ENCODE measurements at regions of chr1 and their contacts with region 1.

Region 1: DNA sequence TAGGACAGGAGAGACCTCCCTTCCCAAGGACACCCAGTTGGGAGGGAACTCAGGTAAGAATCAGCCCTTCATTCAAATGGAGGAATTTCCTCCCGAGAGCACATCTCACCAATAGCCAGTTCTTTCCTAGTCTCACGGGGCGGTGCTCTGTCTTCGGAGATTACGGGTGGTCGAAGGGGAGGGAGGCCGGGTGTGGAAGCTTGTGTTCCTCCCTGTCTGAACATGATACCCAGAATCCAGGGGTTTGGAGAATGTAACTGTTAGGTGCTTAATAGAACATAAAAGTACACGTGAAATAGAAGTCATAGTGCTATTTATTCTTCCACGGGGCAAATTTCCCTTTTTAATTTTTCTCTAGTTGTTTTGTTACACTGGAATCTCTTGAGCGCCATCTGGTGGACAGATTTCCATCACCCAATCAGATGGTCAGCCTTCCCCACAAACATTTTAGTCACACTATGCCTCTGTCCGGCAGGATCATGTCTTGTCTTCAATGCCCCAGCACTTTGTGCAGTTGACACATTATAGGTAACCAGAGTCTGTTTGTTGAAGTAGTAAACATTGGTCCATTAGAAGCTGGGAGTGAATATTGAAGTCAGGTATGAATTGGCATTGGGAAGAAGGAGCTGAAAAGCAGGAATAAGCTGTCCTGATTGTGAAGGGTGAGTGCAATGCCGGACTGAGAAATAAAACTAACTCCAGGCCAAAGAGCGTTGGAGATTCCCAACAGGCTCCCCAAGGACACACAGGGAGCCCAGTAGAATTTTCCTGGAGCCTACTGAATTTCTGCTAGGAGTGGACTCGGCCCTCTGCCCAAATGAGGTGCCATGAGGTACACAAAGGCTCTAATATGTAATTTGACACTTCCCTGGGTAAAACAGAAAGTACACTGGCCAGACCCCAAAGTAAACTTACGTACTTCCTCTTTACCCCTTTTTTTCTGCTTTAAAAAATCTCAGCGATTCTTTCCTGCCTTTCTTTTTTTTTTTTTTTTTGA is 27.6 kb upstream of the ZNF697 start:
- DNase-seq: peak; percentile 58 to 73
- ATAC-seq: peak; percentile 92 to 95
- H3K4me3 ChIP-seq: peak overlapping the region; percentile 31; the same call in 2 of the 3 replicates
- H3K27ac ChIP-seq: peak overlapping the region in 1 of 2 experiments; percentile 66; a peak in 2 of 6 replicates
- H3K4me1 ChIP-seq: no peaks in the 10 kb centered on the region
- CTCF ChIP-seq: peak; percentile 79
- EP300 ChIP-seq: no peak
- POLR2A ChIP-seq: no peak
- RAD21 ChIP-seq: peak; percentile 57 to 64; a peak in 4 of 5 replicates

Region 2: DNA sequence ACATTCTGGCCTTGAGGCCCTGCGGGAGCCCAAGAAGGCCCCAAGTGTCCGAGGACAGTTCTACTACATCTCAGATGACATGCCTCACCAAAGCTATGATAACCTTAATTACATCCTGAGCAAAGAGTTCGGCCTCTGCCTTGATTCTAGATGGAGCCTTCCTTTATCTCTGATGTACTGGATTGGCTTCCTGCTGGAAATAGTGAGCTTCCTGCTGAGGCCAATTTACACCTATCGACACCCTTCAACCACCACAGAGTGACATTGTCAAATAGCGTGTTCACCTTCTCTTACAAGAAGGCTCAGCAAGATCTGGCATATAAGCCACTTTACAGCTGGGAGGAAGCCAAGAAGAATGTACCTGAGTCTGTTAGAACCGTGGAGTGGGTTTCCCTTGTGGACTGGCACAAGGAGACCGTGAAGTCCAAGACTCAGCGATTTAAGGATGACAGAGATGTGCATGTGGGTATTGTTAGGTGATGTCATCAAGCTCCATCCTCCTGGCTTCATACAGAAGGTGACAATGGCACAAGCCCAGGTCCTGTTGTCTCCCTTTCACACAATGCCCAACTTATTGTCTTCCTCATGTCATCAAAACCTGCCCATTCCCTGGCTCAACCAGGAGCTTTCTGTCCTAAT is 66.7 kb before region 1 on chr1:
- CTCF ChIA-PET with region 1: interaction called, 177 read pairs
- POLR2A ChIA-PET with region 1: no interaction called
- DNase-seq: no peak
- ATAC-seq: no peak
- H3K4me3 ChIP-seq: no peak overlapping the region
- H3K27ac ChIP-seq: no peak overlapping the region
- H3K4me1 ChIP-seq: no peaks in the 10 kb centered on the region
- CTCF ChIP-seq: no peak
- EP300 ChIP-seq: no peak
- POLR2A ChIP-seq: no peak
- RAD21 ChIP-seq: no peak

Region 3: GRCh38 chr1:119626841-119627240 is 48.8 kb before region 1 on chr1:
- CTCF ChIA-PET with region 1: interaction called, 16 read pairs
- POLR2A ChIA-PET with region 1: no interaction called
- DNase-seq: no peak
- ATAC-seq: no peak
- H3K4me3 ChIP-seq: no peak overlapping the region
- H3K27ac ChIP-seq: no peak overlapping the region
- H3K4me1 ChIP-seq: no peaks in the 10 kb centered on the region
- CTCF ChIP-seq: no peak
- EP300 ChIP-seq: no peak
- POLR2A ChIP-seq: no peak
- RAD21 ChIP-seq: no peak

Region 4: DNA sequence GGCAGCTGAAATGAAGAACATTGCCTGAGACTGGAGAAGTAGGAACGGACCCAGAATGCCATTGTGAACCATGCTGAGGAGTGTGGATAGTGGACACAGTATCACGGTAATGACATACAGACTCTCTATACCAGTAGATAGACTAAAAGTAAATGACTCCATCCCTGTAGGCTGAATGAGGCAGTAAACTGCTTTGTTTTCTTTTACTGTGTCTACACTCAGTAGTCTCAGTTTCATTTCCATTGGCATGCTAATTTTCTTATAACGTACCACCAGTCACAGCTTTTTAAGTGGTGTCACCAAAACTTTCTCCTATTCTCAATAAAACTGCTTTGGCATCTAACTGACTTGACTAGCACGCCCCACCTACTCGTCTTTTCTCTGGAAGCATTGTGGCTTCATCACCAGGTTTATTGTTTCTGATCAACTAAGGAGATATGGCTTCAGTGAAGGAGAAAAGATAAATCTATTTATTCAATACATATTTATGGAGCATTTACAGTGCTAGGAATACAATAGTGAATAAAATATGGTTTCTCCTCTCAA is 19.2 kb before region 1 on chr1:
- CTCF ChIA-PET with region 1: interaction called, 42 read pairs
- POLR2A ChIA-PET with region 1: no interaction called
- DNase-seq: no peak
- ATAC-seq: no peak
- H3K4me3 ChIP-seq: no peak overlapping the region
- H3K27ac ChIP-seq: no peak overlapping the region
- H3K4me1 ChIP-seq: no peaks in the 10 kb centered on the region
- CTCF ChIP-seq: no peak
- EP300 ChIP-seq: no peak
- POLR2A ChIP-seq: no peak
- RAD21 ChIP-seq: no peak

Region 5: DNA sequence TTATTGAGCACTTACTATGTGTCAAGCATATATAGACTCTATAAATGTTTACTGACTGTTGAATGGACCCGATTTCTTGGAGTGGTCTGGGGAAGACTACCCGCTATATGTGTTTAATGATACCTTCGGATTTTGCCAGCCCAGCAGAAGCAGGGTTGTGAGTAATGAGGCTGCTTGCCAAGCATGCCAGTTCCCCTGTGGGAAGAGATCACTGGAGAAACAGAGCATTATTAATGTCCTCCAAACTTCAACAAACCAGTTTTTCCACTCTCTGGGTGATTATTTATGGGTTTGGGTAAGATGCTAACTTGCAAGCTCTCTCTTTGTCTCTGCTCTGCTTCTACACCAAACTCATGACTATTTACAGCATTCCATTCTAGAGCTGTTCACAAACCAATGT is 11.0 kb after region 1 on chr1:
- CTCF ChIA-PET with region 1: interaction called, 16 read pairs
- POLR2A ChIA-PET with region 1: no interaction called
- DNase-seq: no peak
- ATAC-seq: no peak
- H3K4me3 ChIP-seq: no peak overlapping the region
- H3K27ac ChIP-seq: no peak overlapping the region
- H3K4me1 ChIP-seq: no peaks in the 10 kb centered on the region
- CTCF ChIP-seq: no peak
- EP300 ChIP-seq: no peak
- POLR2A ChIP-seq: no peak
- RAD21 ChIP-seq: no peak

Measured in A549 (cell line).